Sigmoid colon (tissue), 7 donors: ENCODE measurements at regions of chr12 and their contacts with region 1.

Region 1: DNA sequence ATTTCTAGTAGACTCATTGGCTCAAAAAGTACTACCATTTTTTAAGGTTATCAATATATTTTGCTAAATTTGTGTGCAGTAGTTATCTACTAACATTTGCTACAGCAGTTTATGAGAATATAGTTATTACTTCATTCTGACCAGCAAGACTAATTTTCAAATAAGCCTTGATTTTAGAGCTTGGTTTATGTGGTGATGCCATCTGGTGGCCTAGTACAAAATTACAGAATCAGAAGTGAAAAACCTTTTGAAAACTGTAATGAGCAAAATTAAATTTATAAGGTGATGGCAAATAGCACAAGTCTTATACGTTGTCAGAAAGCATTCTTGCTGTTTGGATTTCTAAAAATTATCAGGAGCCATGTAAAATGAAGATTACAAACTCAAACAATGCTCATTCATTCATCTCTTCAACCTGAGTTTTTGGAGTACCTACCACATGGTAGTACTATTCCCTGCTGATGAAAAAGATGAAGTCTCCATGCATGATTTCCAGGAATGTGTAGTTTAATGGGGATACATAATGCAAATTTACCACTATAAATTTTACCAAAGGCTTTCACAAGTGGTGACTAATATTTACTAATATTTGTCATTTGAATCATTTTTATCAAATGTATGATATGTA is 51.0 kb downstream of the MAGOHB start:
- DNase-seq: no peak
- H3K4me3 ChIP-seq: no peak overlapping the region
- H3K27ac ChIP-seq: no peak overlapping the region
- H3K4me1 ChIP-seq: no peaks in the 10 kb centered on the region
- H3K27me3 ChIP-seq: no peaks in the 10 kb centered on the region
- CTCF ChIP-seq: peak in 3 of 4 experiments; percentile 64 to 72 (median 66)
- EP300 ChIP-seq: no peak
- POLR2A ChIP-seq: no peak

Region 2: GRCh38 chr12:10069099-10069498 is 493.3 kb before region 1 on chr12:
- intact Hi-C with region 1: no loop called
- DNase-seq: no peak
- H3K4me3 ChIP-seq: no peak overlapping the region
- H3K27ac ChIP-seq: peak overlapping the region in 3 of 4 donors; percentile 55 to 63 (median 62)
- H3K4me1 ChIP-seq: peaks cover 0 to 22% (median 12%) of the 10 kb centered on the region in 4 donors
- H3K27me3 ChIP-seq: no peaks in the 10 kb centered on the region
- CTCF ChIP-seq: no peak
- EP300 ChIP-seq: no peak
- POLR2A ChIP-seq: no peak

Region 3: DNA sequence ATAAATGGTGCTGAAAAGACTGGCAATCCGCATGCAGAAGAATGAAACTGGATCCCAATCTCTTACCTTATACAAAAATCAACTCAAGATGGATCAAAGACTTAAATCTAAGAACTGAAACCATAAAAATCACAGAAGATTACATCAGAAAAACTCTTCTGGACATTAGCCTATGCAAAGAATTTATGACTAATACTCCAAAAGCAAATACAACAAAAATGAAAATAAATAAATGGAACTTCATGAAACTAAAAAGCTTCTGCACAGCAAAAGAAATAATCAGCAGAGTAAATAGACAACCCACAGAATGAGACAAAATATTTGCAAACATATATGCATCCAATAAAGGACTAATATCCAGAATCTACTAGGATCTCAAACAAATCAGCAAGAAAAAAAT is 449.3 kb before region 1 on chr12:
- intact Hi-C with region 1: no loop called
- DNase-seq: no peak
- H3K4me3 ChIP-seq: no peak overlapping the region
- H3K27ac ChIP-seq: no peak overlapping the region
- H3K4me1 ChIP-seq: no peaks in the 10 kb centered on the region
- H3K27me3 ChIP-seq: no peaks in the 10 kb centered on the region
- CTCF ChIP-seq: no peak
- EP300 ChIP-seq: no peak
- POLR2A ChIP-seq: no peak

Region 4: DNA sequence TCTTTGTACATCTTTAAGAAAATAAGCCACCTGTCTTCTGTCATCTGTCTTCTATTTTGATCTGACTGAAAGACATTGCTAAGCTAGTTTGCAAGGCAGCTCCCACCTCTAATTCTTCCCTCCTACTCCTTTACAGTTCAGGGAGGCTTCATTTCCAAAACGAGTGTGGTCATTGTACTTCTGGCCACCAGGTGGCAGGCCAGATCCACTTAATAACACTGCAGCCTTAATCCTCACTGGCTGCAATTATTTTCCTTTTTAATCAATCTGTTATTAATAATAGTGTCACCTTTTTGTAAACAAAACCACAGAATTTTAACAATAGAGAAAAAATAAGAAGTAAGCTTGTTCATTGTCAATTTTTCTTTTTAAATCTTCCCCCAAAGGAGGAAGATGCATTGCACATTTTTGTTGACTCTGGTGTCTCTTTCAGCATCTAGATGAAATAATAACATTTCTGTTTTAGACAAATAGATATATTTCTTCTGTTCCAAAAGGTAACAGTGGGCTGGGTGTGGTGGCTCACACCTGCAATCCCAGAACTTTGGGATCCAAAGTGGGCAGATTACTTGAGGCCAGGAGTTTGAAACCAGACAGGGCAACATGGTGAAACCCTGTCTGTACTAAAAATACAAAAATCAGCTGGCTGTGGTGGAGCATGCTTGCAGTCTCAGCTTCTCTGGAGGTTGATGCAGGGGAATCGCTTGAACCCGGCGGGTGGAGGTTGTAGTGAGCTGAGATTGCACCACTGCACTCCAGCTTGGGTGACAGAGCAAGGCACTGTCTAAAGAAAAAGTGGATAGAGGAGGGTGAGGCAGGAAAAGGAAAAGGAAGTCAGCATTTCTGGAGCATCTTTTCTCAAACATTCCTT is 326.4 kb before region 1 on chr12:
- intact Hi-C with region 1: loop called (anchors 1 kb)
- DNase-seq: no peak
- H3K4me3 ChIP-seq: no peak overlapping the region
- H3K27ac ChIP-seq: no peak overlapping the region
- H3K4me1 ChIP-seq: no peaks in the 10 kb centered on the region
- H3K27me3 ChIP-seq: no peaks in the 10 kb centered on the region
- CTCF ChIP-seq: peak; percentile 60 to 87 (median 81)
- EP300 ChIP-seq: no peak
- POLR2A ChIP-seq: no peak

Region 5: GRCh38 chr12:10331642-10332239 is 230.7 kb before region 1 on chr12:
- intact Hi-C with region 1: loop called (anchors 1 kb)
- DNase-seq: no peak
- H3K4me3 ChIP-seq: no peak overlapping the region
- H3K27ac ChIP-seq: no peak overlapping the region
- H3K4me1 ChIP-seq: no peaks in the 10 kb centered on the region
- H3K27me3 ChIP-seq: no peaks in the 10 kb centered on the region
- CTCF ChIP-seq: peak; percentile 48 to 64 (median 56)
- EP300 ChIP-seq: no peak
- POLR2A ChIP-seq: no peak

Region 6: GRCh38 chr12:10528174-10528953 is 34.1 kb before region 1 on chr12:
- intact Hi-C with region 1: no loop called
- DNase-seq: no peak
- H3K4me3 ChIP-seq: no peak overlapping the region
- H3K27ac ChIP-seq: no peak overlapping the region
- H3K4me1 ChIP-seq: no peaks in the 10 kb centered on the region
- H3K27me3 ChIP-seq: no peaks in the 10 kb centered on the region
- CTCF ChIP-seq: no peak
- EP300 ChIP-seq: no peak
- POLR2A ChIP-seq: no peak